ENCODE measurements at regions of chrX and their contacts with region 1.

Region 1: DNA sequence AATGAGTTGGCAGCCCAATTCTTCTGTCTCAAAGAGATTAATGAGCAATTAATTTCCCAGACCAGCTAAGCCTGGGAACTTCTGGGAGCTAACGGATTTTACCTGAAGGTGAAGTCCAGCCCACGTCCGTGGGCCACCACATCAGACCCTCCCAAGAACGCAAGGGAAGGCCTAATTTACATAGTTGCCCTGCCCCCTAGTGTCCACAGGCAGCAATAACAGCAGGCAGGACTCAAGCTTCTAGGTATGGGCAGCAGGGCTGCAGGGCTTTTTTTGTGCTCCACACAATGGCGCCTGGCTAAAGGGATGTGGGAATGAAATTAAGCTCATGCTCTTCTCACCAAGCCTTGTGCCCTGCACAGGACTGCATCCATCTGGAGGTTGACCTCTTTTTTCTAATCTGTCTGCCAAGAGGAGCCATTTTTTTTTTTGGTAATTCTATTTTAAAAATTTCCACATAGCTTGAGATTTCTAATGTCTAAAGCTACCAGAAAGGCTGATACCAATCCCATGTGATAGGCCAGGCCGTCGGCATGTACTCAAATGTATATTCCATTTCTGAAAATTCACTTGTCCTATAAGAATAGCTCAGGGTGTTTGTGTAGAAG is 111.9 kb upstream of the TMEM164 start:
- DNase-seq: no peak
- H3K4me3 ChIP-seq: no peak overlapping the region
- H3K27ac ChIP-seq: no peak overlapping the region
- H3K27me3 ChIP-seq: no peaks in the 10 kb centered on the region
- CTCF ChIP-seq: peak; percentile 83

Region 2: GRCh38 chrX:109485470-109486340 is 405.3 kb before region 1 on chrX:
- CTCF ChIA-PET with region 1: interaction called, 109 read pairs
- POLR2A ChIA-PET with region 1: no interaction called
- DNase-seq: peak; percentile 33
- H3K4me3 ChIP-seq: no peak overlapping the region
- H3K27ac ChIP-seq: no peak overlapping the region
- H3K27me3 ChIP-seq: peaks cover 3% of the 10 kb centered on the region
- CTCF ChIP-seq: peak; percentile 87

Region 3: GRCh38 chrX:109635176-109635575 is 255.8 kb before region 1 on chrX:
- CTCF ChIA-PET with region 1: interaction called, 24 read pairs
- POLR2A ChIA-PET with region 1: no interaction called
- DNase-seq: no peak
- H3K4me3 ChIP-seq: no peak overlapping the region
- H3K27ac ChIP-seq: no peak overlapping the region
- H3K27me3 ChIP-seq: no peaks in the 10 kb centered on the region
- CTCF ChIP-seq: peak; percentile 48

Region 4: GRCh38 chrX:109687903-109688302 is 203.1 kb before region 1 on chrX:
- CTCF ChIA-PET with region 1: interaction called, 18 read pairs
- POLR2A ChIA-PET with region 1: no interaction called
- DNase-seq: no peak
- H3K4me3 ChIP-seq: no peak overlapping the region
- H3K27ac ChIP-seq: no peak overlapping the region
- H3K27me3 ChIP-seq: no peaks in the 10 kb centered on the region
- CTCF ChIP-seq: no peak

Region 5: DNA sequence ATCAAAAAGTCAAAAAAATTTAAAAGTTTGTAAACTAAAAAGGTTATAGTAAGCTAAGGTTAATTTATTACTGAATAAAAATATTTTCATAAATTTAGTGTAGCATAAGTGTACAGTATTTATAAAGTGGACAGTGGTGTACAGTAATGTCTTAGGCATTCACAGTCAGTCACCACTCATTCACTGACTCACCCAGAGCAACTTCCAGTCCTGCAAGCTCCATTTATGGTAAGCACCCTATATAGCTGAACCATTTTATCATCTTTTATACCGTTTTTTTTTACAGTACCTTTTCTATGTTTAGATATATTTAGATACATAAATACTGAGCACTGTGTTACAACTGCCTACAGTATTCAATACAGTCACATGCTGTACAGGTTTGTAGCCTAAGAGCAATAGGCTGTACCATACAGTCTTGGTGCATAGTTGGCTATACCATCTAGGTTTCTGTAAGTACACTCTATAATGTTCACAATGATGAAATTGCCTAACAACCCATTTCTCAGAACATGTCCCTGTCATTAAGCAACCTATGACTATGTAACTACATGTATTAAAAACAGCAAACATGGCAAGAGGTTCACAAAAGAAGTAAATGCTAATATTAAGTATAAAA is 176.6 kb before region 1 on chrX:
- CTCF ChIA-PET with region 1: interaction called, 136 read pairs
- POLR2A ChIA-PET with region 1: no interaction called
- DNase-seq: peak; percentile 59
- H3K4me3 ChIP-seq: no peak overlapping the region
- H3K27ac ChIP-seq: peak overlapping the region; percentile 88
- H3K27me3 ChIP-seq: no peaks in the 10 kb centered on the region
- CTCF ChIP-seq: no peak

Region 6: DNA sequence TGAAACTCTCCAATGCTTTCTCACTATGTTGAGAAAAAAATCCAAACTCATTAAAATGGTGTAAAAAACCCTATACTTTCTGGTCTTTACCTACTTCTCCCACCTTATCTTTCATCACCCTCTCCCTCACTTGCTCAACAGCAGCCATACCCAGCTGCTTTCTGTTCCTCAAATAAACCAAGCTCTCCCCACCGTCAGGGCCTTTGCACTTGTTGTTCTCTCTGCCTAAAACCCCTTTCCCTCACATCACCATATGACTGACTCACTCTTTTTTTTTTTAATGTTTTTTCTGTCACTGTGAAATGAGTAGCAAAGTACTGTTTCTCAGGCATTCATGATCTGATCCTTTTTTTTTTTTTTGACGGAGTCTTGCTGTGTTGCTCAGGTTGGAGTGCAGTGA is 10.4 kb before region 1 on chrX:
- CTCF ChIA-PET with region 1: interaction called, 24 read pairs
- POLR2A ChIA-PET with region 1: no interaction called
- DNase-seq: no peak
- H3K4me3 ChIP-seq: no peak overlapping the region
- H3K27ac ChIP-seq: no peak overlapping the region
- H3K27me3 ChIP-seq: no peaks in the 10 kb centered on the region
- CTCF ChIP-seq: no peak

Region 7: GRCh38 chrX:110146521-110146920 is 255.5 kb after region 1 on chrX:
- CTCF ChIA-PET with region 1: interaction called, 27 read pairs
- POLR2A ChIA-PET with region 1: no interaction called
- DNase-seq: no peak
- H3K4me3 ChIP-seq: no peak overlapping the region
- H3K27ac ChIP-seq: no peak overlapping the region
- H3K27me3 ChIP-seq: no peaks in the 10 kb centered on the region
- CTCF ChIP-seq: peak; percentile 71

Measured in AG04450 (cell line).